Sigmoid colon (tissue), 7 donors: ENCODE measurements at regions of chr2 and their contacts with region 1.

Region 1: GRCh38 chr2:143433251-143433650 is 304.0 kb downstream of the ARHGAP15 start:
- DNase-seq: no peak
- H3K4me3 ChIP-seq: no peak overlapping the region
- H3K27ac ChIP-seq: no peak overlapping the region
- H3K4me1 ChIP-seq: no peaks in the 10 kb centered on the region
- H3K27me3 ChIP-seq: no peaks in the 10 kb centered on the region
- CTCF ChIP-seq: no peak
- EP300 ChIP-seq: no peak
- POLR2A ChIP-seq: no peak

Region 2: DNA sequence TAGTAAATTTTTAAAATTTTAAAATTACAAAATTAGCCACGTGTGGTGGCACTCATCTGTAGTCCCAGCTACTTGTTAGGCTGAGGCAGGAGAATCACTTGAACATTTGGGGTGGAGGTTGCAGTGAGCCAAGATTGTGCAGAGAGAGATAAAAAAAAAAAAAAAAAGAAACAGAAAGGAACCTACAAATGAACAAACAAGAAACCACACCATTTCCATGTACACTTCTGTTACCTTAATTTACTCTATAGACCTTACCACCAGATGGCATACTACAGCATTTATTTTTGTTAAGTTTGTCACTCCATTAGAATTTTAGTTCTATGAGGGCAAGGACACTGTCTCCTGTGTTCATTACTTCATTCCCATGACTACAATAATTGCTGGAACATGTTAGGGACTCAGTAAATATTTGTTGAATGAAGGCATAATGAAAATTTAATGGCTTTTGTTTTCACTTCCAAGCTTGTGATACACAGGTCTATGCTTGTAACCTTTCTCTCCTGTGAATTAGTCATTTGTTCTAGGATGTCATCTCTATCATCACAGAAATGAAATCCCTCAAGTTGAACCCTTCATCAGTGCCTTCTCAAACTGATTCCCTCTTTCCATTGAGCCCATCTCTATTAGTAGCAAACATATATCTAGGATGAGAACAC is 228.0 kb before region 1 on chr2:
- intact Hi-C with region 1: no loop called
- DNase-seq: no peak
- H3K4me3 ChIP-seq: no peak overlapping the region
- H3K27ac ChIP-seq: no peak overlapping the region
- H3K4me1 ChIP-seq: no peaks in the 10 kb centered on the region
- H3K27me3 ChIP-seq: no peaks in the 10 kb centered on the region
- CTCF ChIP-seq: no peak
- EP300 ChIP-seq: no peak
- POLR2A ChIP-seq: no peak

Region 3: DNA sequence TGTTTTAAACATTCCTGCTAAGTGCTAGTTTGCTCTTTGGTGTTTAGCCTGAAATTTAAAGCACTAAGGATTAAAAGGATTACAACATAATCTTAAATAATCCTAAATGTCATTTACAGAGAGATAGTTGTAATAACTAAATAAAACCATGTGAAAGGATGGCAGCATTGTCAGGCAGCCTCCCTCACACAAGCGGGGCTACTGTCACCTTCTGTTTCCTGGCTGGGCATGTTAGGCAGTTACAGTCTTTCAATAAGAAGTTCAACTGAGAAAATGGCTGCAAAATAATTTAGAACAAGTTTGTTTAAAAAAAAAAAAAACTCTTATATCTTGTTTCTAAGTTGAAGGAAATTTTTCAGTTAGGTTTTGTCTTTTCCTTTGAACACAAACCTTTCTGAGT is 179.1 kb before region 1 on chr2:
- intact Hi-C with region 1: no loop called
- DNase-seq: no peak
- H3K4me3 ChIP-seq: no peak overlapping the region
- H3K27ac ChIP-seq: no peak overlapping the region
- H3K4me1 ChIP-seq: no peaks in the 10 kb centered on the region
- H3K27me3 ChIP-seq: no peaks in the 10 kb centered on the region
- CTCF ChIP-seq: no peak
- EP300 ChIP-seq: no peak
- POLR2A ChIP-seq: no peak

Region 4: DNA sequence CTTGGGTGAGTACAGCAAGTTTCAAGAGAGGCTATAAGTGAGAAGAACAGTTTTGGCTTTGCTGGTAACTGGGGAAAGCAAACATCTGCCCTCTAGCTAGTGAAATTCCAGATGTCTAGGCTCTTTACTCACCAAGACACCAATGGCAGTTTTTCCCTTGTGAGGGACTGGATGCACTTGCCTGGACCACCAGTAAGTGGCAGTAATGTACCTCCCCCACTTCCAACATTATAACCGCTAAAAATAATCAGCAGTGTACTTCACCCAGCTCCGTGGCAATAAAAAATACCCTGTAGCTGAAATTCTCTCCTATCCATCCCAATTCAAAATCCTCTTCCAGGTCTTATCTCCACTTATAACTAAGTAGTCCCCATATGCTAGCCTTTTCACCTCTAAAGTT is 79.8 kb after region 1 on chr2:
- intact Hi-C with region 1: no loop called
- DNase-seq: no peak
- H3K4me3 ChIP-seq: no peak overlapping the region
- H3K27ac ChIP-seq: peak overlapping the region in 1 of 4 donors; percentile 14
- H3K4me1 ChIP-seq: no peaks in the 10 kb centered on the region
- H3K27me3 ChIP-seq: no peaks in the 10 kb centered on the region
- CTCF ChIP-seq: peak in 3 of 4 experiments; percentile 24 to 52 (median 42)
- EP300 ChIP-seq: no peak
- POLR2A ChIP-seq: no peak

Region 5: DNA sequence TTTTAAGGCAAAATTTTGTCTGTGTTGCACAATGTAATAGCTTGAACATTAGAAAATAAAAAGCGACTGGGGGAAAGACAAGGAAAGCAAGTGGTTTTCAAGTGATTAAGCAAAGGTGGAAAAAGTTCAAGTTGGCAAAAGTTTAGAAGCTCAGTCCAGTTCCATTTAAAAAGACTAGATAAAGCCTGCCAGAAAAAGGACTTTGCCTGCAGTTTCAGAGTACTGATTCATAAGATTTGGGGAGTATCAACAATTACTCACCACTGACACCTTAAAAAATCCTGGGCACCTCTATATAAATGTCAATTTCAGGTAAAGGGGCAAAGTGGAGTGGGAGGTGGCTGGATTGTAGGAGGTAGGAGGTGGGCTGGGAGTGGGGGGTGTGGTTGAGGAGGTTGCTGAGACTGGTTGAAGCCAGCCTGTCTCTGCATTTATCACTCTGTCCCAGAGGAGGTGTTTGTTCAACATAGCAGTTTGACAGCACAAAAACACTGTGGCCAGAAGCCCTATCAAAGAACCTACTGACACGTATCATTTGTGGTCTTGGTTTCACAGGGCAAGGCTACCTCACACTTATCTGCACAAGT is 1072.1 kb after region 1 on chr2:
- intact Hi-C with region 1: loop called (anchors 10 kb)
- DNase-seq: no peak
- H3K4me3 ChIP-seq: no peak overlapping the region
- H3K27ac ChIP-seq: peak overlapping the region; percentile 41 to 85 (median 58)
- H3K4me1 ChIP-seq: peaks cover 0 to 22% (median 6%) of the 10 kb centered on the region in 4 donors
- H3K27me3 ChIP-seq: no peaks in the 10 kb centered on the region
- CTCF ChIP-seq: no peak
- EP300 ChIP-seq: no peak
- POLR2A ChIP-seq: no peak